WTC11 (cell line): ENCODE measurements at regions of chr2 and their contacts with region 1.

Region 1: GRCh38 chr2:70616168-70616694 is 62.6 kb upstream of the TGFA start:
- DNase-seq: no peak
- ATAC-seq: no peak
- H3K4me3 Mint-ChIP-seq: no peak overlapping the region
- H3K27ac Mint-ChIP-seq: no peak overlapping the region
- H3K4me1 Mint-ChIP-seq: peaks cover 40% of the 10 kb centered on the region
- H3K27me3 Mint-ChIP-seq: no peaks in the 10 kb centered on the region; the same call in 1 of the 2 replicates
- CTCF ChIP-seq: no peak

Region 2: GRCh38 chr2:70385966-70386595 is 230.2 kb before region 1 on chr2:
- CTCF ChIA-PET with region 1: interaction called, 14 read pairs
- POLR2A ChIA-PET with region 1: no interaction called
- DNase-seq: peak; percentile 69
- ATAC-seq: peak; percentile 78
- H3K4me3 Mint-ChIP-seq: no peak overlapping the region
- H3K27ac Mint-ChIP-seq: no peak overlapping the region
- H3K4me1 Mint-ChIP-seq: no peaks in the 10 kb centered on the region
- H3K27me3 Mint-ChIP-seq: peaks cover 91% of the 10 kb centered on the region
- CTCF ChIP-seq: no peak

Region 3: DNA sequence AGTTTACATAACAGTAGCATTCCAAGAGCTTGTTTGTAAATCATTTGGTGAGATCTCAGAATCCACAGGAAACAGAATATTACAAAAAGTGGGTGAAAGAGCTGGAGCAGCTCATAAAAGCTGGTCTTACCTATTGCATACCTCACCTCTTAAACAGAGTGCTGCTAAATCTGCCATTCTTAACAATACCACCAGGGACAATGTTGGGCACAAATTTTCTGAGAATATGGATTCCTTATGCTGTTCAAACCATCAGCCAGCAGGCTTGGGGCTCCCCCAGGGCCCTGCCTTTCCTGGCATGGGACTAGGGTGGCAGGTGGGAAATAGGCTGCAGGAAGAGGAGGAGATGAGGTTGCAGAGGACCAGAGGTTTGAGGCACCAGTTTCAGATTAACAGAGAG is 118.2 kb before region 1 on chr2:
- CTCF ChIA-PET with region 1: interaction called, 14 read pairs
- POLR2A ChIA-PET with region 1: no interaction called
- DNase-seq: no peak
- ATAC-seq: peak; percentile 96
- H3K4me3 Mint-ChIP-seq: no peak overlapping the region
- H3K27ac Mint-ChIP-seq: no peak overlapping the region
- H3K4me1 Mint-ChIP-seq: peaks cover 16% of the 10 kb centered on the region
- H3K27me3 Mint-ChIP-seq: peaks cover 22% of the 10 kb centered on the region
- CTCF ChIP-seq: peak; percentile 35; the same call in 1 of the 2 replicates

Region 4: DNA sequence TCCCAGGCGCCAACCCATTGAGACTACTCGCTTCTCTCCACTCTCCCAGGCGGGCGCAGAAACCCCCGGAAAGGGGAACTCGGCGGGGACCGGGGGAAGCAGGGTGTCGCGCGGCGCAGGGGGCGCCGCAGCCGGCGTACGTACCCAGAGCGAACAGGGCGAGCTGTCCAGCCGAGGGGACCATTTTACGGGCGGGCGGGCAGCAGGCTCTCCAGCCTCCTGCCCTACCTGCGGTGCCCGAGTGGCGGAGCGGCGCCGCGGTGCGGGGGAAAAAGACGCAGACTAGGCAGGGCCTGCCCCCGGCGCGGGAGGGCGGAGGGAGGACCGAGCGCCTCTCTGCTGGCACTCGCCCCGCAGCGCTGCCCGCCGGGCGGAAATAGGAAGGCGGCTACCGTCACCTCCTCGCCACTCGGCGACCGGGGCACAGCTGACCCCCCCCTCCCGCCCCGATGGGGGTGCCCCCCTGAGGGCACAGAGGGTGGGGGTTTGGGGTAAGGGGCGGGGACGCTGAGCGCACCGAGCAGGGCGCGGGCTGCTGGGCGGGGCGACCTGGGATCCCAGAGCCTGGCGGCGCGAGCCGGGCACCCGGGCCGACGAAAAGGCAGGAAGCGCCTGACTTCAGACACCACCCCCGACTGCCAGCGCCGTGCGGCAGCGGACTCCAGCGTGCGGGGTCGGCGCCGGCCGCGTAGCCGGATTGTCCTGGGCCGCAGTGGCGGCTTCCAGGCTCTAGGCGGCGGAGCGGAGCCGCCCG is 62.5 kb before region 1 on chr2 and contains the start of gene TGFA:
- CTCF ChIA-PET with region 1: interaction called, 18 read pairs
- POLR2A ChIA-PET with region 1: no interaction called
- DNase-seq: peak; percentile 87
- ATAC-seq: peak; percentile 87
- H3K4me3 Mint-ChIP-seq: peak within 1 kb of the TSS; percentile 81
- H3K27ac Mint-ChIP-seq: no peak within 1 kb of the TSS
- H3K4me1 Mint-ChIP-seq: peaks cover 19% of the 10 kb centered on the region
- H3K27me3 Mint-ChIP-seq: peaks cover 91% of the 10 kb centered on the region
- CTCF ChIP-seq: no peak; the same call in 1 of the 2 replicates
- total RNA-seq, gene TGFA: 2.5 to 3.0 TPM (median 2.7 TPM) in 3 replicates

Region 5: DNA sequence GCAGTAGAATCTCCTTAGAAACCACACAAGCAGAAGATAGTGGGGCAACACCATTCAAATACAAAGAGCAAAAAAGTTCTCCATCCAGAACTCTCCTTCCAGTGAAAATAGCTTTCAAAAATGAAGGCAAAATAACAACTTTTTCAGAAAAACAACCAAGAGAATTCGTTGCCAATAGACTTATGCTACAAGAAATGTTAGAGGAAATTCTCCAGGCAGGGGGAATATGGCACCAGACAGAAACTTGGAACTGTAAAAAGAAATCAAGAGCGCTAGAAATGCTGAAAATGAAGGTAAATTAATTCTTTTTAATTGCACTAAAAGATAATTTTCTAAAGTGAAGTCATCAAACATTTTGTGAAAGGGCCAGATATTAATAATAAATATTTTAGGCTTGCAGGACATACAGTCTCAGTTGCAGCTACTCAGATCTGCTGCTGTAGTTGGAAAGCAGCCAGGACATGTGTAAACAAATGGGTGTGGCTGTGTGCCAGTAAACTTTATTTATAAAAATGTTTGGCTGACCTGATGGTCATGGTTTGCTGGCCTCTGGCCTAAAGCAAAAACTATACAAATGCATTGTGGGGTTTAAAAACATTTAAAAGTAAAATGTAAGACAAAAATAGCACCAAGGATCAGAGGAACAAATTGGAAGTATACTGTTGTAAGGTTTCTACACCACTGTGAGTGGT is 11.1 kb after region 1 on chr2:
- CTCF ChIA-PET with region 1: interaction called, 29 read pairs
- POLR2A ChIA-PET with region 1: no interaction called
- DNase-seq: no peak
- ATAC-seq: no peak
- H3K4me3 Mint-ChIP-seq: no peak overlapping the region
- H3K27ac Mint-ChIP-seq: peak overlapping the region; percentile 89
- H3K4me1 Mint-ChIP-seq: peaks cover 35% of the 10 kb centered on the region
- H3K27me3 Mint-ChIP-seq: peaks cover 3% of the 10 kb centered on the region; the same call in 1 of the 2 replicates
- CTCF ChIP-seq: no peak

Region 6: DNA sequence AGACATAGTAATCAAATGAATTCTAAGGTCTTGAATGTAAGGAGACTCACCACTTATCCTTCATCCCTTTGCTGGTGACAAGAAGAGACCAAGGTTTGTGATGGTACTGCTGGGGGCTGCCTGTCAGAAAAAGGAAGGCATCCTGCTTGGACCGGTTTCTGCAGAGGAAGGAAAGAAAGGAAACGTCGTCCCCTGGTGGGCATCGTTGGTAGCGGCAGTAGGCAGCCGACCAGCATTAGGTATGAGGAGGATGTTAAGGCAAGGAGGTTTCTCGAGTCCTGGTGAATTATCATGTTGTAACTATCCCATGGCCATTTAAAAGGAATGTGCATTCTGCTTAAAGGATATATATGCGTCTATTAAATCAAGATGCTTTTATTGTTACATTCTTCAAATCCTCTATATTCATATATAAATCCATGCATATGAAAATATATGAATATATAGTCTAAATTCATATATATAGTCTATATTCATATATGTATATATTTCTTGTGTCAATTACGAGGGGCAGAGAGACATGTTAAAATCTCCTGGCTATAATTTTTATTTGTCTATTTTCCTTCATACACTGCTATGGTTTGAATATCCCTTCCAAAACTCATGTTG is 31.7 kb after region 1 on chr2:
- CTCF ChIA-PET with region 1: interaction called, 15 read pairs
- POLR2A ChIA-PET with region 1: no interaction called
- DNase-seq: peak; percentile 90
- ATAC-seq: peak; percentile 76
- H3K4me3 Mint-ChIP-seq: no peak overlapping the region
- H3K27ac Mint-ChIP-seq: no peak overlapping the region
- H3K4me1 Mint-ChIP-seq: no peaks in the 10 kb centered on the region
- H3K27me3 Mint-ChIP-seq: peaks cover 37% of the 10 kb centered on the region
- CTCF ChIP-seq: peak; percentile 88

Region 7: GRCh38 chr2:70685771-70686171 is 69.5 kb after region 1 on chr2:
- CTCF ChIA-PET with region 1: no interaction called
- POLR2A ChIA-PET with region 1: no interaction called
- DNase-seq: no peak
- ATAC-seq: no peak
- H3K4me3 Mint-ChIP-seq: no peak overlapping the region
- H3K27ac Mint-ChIP-seq: no peak overlapping the region
- H3K4me1 Mint-ChIP-seq: peaks cover 13% of the 10 kb centered on the region
- H3K27me3 Mint-ChIP-seq: no peaks in the 10 kb centered on the region
- CTCF ChIP-seq: no peak